ENCODE measurements at regions of chr16 and their contacts with region 1.

Region 1: DNA sequence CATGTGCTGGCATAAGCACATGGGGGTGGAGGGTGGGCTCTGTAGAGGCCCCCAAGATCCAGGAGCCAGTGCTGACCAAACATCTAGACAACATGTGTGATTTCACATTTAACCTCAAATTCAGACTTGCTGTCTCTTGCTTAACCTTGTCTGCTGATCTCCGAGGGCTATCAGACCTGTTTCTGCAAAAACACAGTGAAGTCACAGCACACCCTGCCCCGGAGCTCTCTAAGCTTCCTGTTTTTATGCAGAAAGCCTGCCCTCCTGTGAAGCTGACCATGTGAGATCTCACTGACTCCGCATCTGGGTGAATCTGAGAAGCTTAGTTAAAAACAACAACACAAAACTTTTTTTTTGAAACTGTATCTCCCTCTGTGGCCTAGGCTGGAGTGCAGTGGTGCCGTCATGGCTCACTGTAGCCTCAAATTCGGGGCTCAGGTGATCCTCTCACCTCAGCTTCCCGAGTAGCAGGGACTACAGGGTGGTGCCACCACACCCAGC is 6.6 kb upstream of the DPEP2 start:
- DNase-seq: no peak
- H3K4me3 ChIP-seq: no peak overlapping the region
- H3K27ac ChIP-seq: no peak overlapping the region
- H3K4me1 ChIP-seq: no peaks in the 10 kb centered on the region
- H3K27me3 ChIP-seq: no peaks in the 10 kb centered on the region
- CTCF ChIP-seq: no peak

Region 2: GRCh38 chr16:67279296-67280089 is 726.3 kb before region 1 on chr16 and contains the start of gene PLEKHG4:
- CTCF ChIA-PET with region 1: no interaction called
- POLR2A ChIA-PET with region 1: no interaction called
- intact Hi-C with region 1: no loop called
- DNase-seq: peak; percentile 87
- H3K4me3 ChIP-seq: peak within 1 kb of the TSS; percentile 69
- H3K27ac ChIP-seq: peak within 1 kb of the TSS; percentile 80
- H3K4me1 ChIP-seq: no peaks in the 10 kb centered on the region
- H3K27me3 ChIP-seq: no peaks in the 10 kb centered on the region
- CTCF ChIP-seq: peak; percentile 52
- total RNA-seq, gene PLEKHG4: 5.8 and 8.9 TPM in 2 replicates

Region 3: DNA sequence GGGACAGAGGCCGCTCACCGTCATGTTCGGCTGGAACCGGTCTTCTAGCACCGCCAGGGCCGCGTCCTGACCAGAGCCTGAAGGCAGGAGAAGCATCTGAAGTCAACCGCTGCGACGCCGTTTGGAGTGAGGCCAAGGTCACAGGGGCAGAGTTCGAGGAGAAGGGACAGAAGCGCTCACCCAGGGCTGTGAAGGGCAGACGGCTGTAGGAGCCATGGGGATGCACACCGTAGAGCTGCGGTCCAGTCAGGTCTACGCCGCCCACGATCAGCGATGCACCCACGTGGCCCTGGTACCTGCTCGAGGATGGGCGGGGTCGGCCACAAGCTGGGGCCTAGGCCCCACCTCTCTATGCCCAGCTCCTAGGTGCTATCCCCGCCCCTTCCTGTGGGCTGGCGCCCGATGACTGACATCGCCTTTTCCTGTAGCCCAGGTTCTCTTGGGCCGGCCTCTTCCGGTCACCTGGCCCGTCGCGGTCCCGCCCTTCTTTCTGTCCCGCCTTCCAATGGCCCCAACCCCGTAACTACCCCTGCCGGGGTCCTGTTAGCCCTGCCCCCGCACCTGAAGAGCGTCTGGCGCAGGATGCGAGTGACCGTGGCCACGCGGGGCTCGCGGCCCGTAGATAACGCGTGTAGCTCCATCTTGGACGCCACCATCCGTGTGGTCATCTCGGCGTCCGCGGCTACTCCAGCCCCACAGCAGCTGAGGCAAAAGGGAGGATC is 70.3 kb before region 1 on chr16:
- CTCF ChIA-PET with region 1: interaction called, 10 read pairs
- POLR2A ChIA-PET with region 1: no interaction called
- intact Hi-C with region 1: no loop called
- DNase-seq: peak; percentile 96
- H3K4me3 ChIP-seq: peak overlapping the region; percentile 85
- H3K27ac ChIP-seq: peak overlapping the region; percentile 75
- H3K4me1 ChIP-seq: peaks cover 16% of the 10 kb centered on the region
- H3K27me3 ChIP-seq: no peaks in the 10 kb centered on the region
- CTCF ChIP-seq: no peak

Region 4: DNA sequence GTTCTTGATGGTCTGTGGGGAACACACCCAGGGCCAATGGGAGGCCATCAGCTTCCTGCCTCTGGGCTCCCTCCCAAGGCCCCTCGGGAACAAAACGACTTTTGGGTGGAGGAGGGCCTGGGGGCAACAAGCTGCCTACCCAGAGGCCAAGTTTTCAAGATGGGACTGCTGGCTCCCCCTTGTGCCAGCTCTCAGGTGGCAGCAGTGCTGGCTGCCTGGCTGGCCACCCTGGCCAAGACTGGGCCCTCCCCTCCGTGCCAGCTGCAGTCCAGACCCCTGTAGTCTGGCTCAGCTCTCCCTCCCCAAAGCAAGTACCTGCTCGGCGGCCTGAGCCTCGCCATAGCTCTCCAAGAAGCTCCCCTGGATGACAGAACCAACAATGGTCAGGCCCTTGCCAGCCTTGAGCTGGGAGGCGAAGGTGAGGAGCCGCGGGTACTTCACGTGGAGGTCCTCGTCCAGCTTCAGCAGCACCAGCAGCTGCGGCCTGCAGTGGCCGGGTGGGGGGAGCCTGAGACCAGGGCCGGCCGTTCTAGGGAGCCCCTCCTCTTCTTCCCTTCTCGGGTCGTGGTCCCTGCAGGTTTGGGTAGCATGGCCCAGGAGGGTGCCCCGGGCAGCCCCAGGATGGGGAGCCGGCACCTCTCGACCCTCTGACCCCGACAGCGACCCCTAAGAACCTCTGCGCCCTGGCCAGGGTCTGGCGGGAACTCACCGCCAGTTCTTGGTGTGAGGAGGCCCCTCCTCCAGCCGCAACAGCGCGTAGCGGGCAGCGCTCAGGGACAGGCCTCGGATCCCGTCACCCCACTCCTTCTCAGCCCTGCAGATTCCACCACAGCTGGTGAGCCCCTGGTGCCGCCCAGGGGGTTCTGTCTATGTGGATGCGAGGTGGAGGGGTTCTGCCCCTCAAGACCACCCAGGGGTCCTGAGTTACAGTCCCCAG is 58.9 kb before region 1 on chr16:
- CTCF ChIA-PET with region 1: no interaction called
- POLR2A ChIA-PET with region 1: no interaction called
- intact Hi-C with region 1: no loop called
- DNase-seq: no peak
- H3K4me3 ChIP-seq: no peak overlapping the region
- H3K27ac ChIP-seq: no peak overlapping the region
- H3K4me1 ChIP-seq: no peaks in the 10 kb centered on the region
- H3K27me3 ChIP-seq: no peaks in the 10 kb centered on the region
- CTCF ChIP-seq: no peak

Region 5: GRCh38 chr16:68074850-68075555 is 69.2 kb after region 1 on chr16:
- CTCF ChIA-PET with region 1: no interaction called
- POLR2A ChIA-PET with region 1: no interaction called
- intact Hi-C with region 1: no loop called
- DNase-seq: no peak
- H3K4me3 ChIP-seq: no peak overlapping the region
- H3K27ac ChIP-seq: no peak overlapping the region
- H3K4me1 ChIP-seq: no peaks in the 10 kb centered on the region
- H3K27me3 ChIP-seq: no peaks in the 10 kb centered on the region
- CTCF ChIP-seq: no peak

Region 6: DNA sequence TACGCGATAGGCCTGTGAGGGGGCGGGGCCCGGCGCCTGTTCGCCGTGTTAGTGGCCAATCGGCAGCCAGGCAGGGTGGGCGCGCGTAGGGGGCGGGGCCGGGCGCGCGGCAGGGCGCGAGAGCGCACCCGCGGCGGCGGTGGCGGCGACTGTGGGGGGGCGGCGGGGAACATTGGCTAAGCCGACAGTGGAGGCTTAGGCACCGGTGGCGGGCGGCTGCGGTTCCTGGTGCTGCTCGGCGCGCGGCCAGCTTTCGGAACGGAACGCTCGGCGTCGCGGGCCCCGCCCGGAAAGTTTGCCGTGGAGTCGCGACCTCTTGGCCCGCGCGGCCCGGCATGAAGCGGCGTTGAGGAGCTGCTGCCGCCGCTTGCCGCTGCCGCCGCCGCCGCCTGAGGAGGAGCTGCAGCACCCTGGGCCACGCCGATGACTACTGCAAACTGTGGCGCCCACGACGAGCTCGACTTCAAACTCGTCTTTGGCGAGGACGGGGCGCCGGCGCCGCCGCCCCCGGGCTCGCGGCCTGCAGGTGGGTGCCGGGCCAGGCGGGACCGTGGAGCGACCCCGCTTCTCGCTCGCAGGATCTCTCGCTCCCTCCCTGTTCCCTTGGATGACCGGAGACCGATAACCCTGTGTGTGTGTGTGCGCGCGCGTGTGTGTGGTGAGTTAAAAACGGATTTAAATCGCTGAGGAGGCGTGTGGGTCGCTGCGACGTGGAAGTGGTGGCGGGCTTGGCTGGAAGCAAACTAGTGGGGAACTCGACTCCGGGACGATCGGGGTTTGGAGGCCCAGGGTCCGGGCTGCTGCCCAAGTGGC is 79.6 kb after region 1 on chr16 and contains the start of gene NFATC3:
- CTCF ChIA-PET with region 1: no interaction called
- POLR2A ChIA-PET with region 1: interaction called, 11 read pairs
- intact Hi-C with region 1: no loop called
- DNase-seq: peak; percentile 98
- H3K4me3 ChIP-seq: peak within 1 kb of the TSS; percentile 88
- H3K27ac ChIP-seq: peak within 1 kb of the TSS; percentile 91
- H3K4me1 ChIP-seq: peaks cover 17% of the 10 kb centered on the region
- H3K27me3 ChIP-seq: no peaks in the 10 kb centered on the region
- CTCF ChIP-seq: no peak
- total RNA-seq, gene NFATC3: 53.7 and 56.0 TPM in 2 replicates

Measured in A673 (cell line).